Activated B cell treated with CpG ODN at 0.5 μM for 24 hours (primary cell): ENCODE measurements at regions of chr7 and their contacts with region 1.

Region 1: GRCh38 chr7:141785706-141786552 is 4.1 kb upstream of the TAS2R5 start:
- DNase-seq: no peak
- ATAC-seq: peak; percentile 40
- H3K4me3 Mint-ChIP-seq: no peak overlapping the region
- H3K27ac Mint-ChIP-seq: no peak overlapping the region
- H3K4me1 Mint-ChIP-seq: no peaks in the 10 kb centered on the region
- H3K27me3 Mint-ChIP-seq: no peaks in the 10 kb centered on the region
- CTCF ChIP-seq: peak; percentile 70

Region 2: GRCh38 chr7:141551094-141551781 is 234.7 kb before region 1 on chr7 and contains the start of gene AGK:
- CTCF ChIA-PET with region 1: no interaction called
- POLR2A ChIA-PET with region 1: no interaction called
- intact Hi-C with region 1: no loop called
- DNase-seq: peak; percentile 69
- ATAC-seq: peak; percentile 94
- H3K4me3 Mint-ChIP-seq: peak within 1 kb of the TSS; percentile 90
- H3K27ac Mint-ChIP-seq: peak within 1 kb of the TSS; percentile 54
- H3K4me1 Mint-ChIP-seq: peaks cover 29% of the 10 kb centered on the region
- H3K27me3 Mint-ChIP-seq: no peaks in the 10 kb centered on the region
- CTCF ChIP-seq: no peak
- total RNA-seq, gene AGK: 35.1 and 39.3 TPM in 2 replicates

Region 3: DNA sequence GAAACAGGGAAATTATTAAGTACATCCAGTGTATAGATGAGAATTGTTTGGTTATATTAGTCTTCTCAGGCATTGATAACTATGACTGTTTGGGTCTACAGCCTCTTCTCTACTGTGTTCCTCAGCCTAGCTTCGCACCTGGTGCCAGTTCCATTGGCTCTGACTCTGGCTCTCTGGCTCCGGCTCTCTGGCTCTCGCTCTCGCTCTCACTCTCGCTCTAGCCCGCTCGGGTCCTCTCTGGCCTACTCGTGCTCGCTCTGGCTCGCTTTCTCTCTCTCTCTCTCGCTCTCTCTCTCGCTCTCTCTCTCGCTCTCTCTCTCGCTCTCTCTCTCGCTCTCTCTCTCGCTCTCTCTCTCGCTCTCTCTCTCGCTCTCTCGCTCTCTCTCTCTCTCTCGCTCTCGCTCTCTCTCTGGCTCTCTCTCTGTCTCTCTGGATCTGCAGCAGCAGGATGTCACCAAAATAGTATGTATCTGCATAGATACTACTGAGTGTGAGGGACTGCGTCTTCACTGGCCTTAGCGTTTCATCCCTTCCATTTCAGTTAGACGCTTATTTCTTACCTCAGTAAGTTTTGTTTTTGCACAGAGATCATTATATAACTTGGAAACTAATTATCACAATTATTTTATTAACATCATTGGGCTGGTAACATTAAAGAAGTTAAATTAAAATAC is 54.3 kb before region 1 on chr7:
- CTCF ChIA-PET with region 1: no interaction called
- POLR2A ChIA-PET with region 1: no interaction called
- intact Hi-C with region 1: no loop called
- DNase-seq: no peak
- ATAC-seq: no peak
- H3K4me3 Mint-ChIP-seq: peak overlapping the region; percentile 45
- H3K27ac Mint-ChIP-seq: peak overlapping the region; percentile 54
- H3K4me1 Mint-ChIP-seq: peaks cover under 1% of the 10 kb centered on the region
- H3K27me3 Mint-ChIP-seq: no peaks in the 10 kb centered on the region
- CTCF ChIP-seq: no peak

Region 4: GRCh38 chr7:141754939-141755338 is 31.0 kb before region 1 on chr7:
- CTCF ChIA-PET with region 1: no interaction called
- POLR2A ChIA-PET with region 1: no interaction called
- intact Hi-C with region 1: loop called (anchors 1 kb)
- DNase-seq: no peak
- ATAC-seq: no peak
- H3K4me3 Mint-ChIP-seq: no peak overlapping the region
- H3K27ac Mint-ChIP-seq: no peak overlapping the region
- H3K4me1 Mint-ChIP-seq: no peaks in the 10 kb centered on the region
- H3K27me3 Mint-ChIP-seq: no peaks in the 10 kb centered on the region
- CTCF ChIP-seq: no peak